ENCODE measurements at regions of chr6 and their contacts with region 1.

Region 1: DNA sequence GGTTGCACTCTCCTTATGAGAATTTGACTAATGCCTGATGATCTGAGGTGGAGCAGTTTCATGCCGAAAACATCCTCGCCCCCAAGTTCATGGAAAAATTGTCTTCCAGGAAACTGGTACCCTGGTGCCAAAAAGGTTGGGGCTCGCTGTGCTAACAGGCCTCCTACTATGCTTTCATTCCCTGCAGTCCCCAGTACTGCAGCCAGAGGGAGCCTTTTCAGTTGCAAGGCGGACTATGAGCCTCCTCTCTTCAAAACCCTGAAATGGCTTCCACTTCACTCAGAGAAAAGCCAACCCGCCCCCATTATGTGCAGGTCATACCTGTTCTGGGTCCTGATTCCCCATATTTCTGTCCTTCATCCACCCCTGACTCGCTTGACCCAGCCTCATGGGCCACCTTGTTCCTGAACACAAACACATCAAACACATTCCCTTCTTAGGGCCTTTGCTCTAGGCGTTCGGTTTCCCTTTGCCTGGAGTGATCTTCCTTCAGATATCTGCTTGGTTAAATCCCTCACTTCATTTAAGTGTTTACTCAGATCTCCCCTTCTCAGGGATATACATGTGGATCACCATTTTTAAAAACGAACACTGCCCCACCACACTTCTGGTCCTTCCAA is 173.7 kb downstream of the PHACTR1 start:
- DNase-seq: no peak
- H3K4me3 ChIP-seq: no peak overlapping the region
- H3K27ac ChIP-seq: no peak overlapping the region
- H3K4me1 ChIP-seq: peaks cover 0 to 9% (median 0%) of the 10 kb centered on the region in 3 donors
- H3K27me3 ChIP-seq: peaks cover 0 to 18% (median 0%) of the 10 kb centered on the region in 4 donors
- CTCF ChIP-seq: peak in 5 of 6 experiments; percentile 14 to 46 (median 19)
- POLR2A ChIP-seq: no peak

Region 2: DNA sequence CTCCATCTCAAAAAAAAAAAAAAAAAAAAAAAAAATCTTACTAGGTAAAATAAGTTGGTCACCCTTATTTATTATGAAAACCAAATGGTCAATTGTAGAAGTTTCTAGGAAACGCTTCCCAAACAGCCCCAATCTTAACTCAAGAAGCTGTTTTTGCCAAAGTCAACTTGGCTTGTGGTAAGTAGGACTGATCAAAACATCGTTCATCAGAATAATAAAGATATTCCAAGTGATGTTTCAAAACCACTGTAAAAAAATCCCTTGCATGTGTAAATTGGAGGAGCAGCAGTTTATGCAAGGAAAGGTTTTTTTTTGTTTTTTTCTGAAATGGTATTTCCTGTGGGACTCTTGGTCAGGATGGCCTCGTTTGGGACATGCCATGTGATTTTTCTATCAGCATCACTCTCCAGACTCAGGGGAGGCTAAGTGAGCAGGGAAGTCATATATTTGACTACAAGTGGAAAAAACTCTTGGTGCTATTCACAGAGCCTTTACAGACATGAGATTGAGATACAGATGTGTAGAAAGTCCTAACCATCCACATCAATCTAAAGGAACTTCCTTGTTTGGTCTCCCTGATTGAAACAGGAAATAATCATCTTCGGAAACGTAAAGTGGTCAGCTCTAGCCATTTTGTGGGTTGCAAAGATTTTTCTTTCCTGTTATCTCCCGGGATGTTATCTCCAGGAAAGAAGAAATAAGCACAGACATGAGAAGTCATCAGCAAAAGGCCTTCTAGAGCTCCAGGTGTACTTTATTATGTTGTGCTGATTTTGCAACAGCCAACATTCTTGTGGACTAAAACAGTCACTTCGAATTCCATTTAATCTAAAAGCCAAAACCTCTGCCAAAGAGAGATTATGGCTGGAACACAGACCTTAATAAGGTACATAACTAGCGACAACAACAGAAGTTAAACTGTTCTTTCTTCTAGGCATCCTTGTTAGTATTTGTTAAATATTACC is 422.3 kb before region 1 on chr6:
- intact Hi-C with region 1: no loop called
- DNase-seq: no peak
- H3K4me3 ChIP-seq: no peak overlapping the region
- H3K27ac ChIP-seq: no peak overlapping the region
- H3K4me1 ChIP-seq: peaks cover 3 to 18% (median 3%) of the 10 kb centered on the region in 3 donors
- H3K27me3 ChIP-seq: no peaks in the 10 kb centered on the region
- CTCF ChIP-seq: no peak
- POLR2A ChIP-seq: no peak

Region 3: DNA sequence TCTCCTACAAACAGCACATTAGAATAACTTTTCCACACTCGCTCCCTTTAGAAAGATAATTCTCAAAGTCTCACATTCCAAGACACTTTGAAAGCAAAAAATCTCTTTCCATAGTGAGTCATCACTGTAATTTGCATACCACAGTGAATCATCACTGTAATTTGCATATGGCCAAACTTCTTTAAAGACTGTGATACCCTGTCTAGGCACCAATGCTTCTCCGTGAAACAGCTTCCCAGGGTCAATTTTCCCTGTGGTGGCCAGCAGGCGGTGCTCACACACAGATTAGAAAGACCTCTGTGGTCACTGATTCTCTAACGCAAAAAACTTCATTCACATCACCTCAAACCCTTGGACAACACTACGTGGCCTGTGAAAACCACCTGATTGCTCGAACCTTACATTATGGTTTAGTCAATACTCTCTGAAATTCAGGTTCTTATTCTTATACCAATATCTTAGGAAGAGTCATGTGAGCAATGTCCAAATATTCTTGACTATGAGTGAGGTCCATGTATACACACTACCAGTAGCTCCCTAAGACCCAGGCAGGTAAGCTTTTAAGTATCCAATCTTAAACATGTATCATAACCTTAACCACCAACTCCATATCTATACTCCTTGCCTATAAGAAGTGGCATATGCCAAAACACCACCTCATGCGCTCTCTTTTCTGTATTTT is 252.2 kb before region 1 on chr6:
- intact Hi-C with region 1: loop called (anchors 10 kb)
- DNase-seq: no peak
- H3K4me3 ChIP-seq: no peak overlapping the region
- H3K27ac ChIP-seq: no peak overlapping the region
- H3K4me1 ChIP-seq: peaks cover 0 to 2% (median 0%) of the 10 kb centered on the region in 3 donors
- H3K27me3 ChIP-seq: peaks cover 0 to 3% (median 0%) of the 10 kb centered on the region in 4 donors
- CTCF ChIP-seq: peak in 5 of 6 experiments; percentile 44 to 71 (median 53)
- POLR2A ChIP-seq: no peak